Transverse colon (tissue), 4 donors: ENCODE measurements at regions of chr6 and their contacts with region 1.

Region 1: DNA sequence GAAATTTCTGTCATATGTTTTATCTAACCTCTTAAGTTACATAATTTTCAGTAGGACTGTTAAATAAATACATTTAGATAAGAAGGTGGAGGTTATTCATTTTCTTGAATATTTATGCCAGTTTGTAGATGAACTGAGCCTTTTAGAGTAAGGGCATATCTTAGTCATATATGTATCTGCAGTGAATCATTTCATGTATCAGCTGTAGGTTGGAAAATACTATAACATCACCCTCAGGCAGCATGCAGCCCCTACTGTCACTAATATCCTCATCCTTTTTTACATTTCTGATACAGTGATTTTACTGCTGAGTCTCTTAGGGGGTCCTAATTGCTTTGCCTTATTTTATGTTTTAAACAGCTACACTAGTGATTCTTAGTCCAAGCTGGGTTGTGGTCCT is 19.5 kb upstream of the SUMO4 start:
- DNase-seq: no peak
- H3K4me3 ChIP-seq: no peak overlapping the region
- H3K27ac ChIP-seq: no peak overlapping the region
- H3K4me1 ChIP-seq: peaks cover 0 to 20% (median 5%) of the 10 kb centered on the region in 4 donors
- H3K27me3 ChIP-seq: no peaks in the 10 kb centered on the region
- CTCF ChIP-seq: no peak
- EP300 ChIP-seq: no peak
- POLR2A ChIP-seq: no peak

Region 2: DNA sequence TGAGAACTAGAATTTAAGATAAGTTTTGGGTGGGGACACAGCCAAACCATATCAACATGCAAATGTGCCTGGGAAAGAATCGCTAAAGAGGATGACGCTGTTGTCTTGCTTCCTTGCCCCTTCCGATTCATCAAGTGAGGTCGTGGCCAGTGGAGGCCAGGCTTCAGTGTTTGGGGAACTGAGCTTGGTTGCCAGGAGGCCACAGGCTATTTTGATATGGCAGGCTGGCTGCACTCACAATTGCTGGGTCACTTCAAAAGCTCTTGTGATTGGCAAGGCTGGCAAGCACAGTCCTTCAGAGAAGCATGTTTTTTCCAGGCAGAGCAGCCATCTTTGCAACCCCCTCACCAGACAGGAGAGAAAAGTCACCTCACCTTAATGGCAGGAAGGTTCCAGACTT is 1826.2 kb before region 1 on chr6:
- in situ Hi-C with region 1: no loop called
- intact Hi-C with region 1: loop called (anchors 5 kb)
- DNase-seq: no peak
- H3K4me3 ChIP-seq: no peak overlapping the region
- H3K27ac ChIP-seq: no peak overlapping the region
- H3K4me1 ChIP-seq: peaks cover 0 to 5% (median 2%) of the 10 kb centered on the region in 4 donors
- H3K27me3 ChIP-seq: no peaks in the 10 kb centered on the region
- CTCF ChIP-seq: no peak
- EP300 ChIP-seq: no peak
- POLR2A ChIP-seq: no peak

Region 3: GRCh38 chr6:149429427-149430360 is 49.2 kb after region 1 on chr6:
- in situ Hi-C with region 1: no loop called
- intact Hi-C with region 1: no loop called
- DNase-seq: no peak
- H3K4me3 ChIP-seq: no peak overlapping the region
- H3K27ac ChIP-seq: no peak overlapping the region
- H3K4me1 ChIP-seq: peaks cover 0 to 16% (median 3%) of the 10 kb centered on the region in 4 donors
- H3K27me3 ChIP-seq: no peaks in the 10 kb centered on the region
- CTCF ChIP-seq: no peak
- EP300 ChIP-seq: no peak
- POLR2A ChIP-seq: no peak